Heart left ventricle (tissue), 16 donors: ENCODE measurements at regions of chr10 and their contacts with region 1.

Region 1: DNA sequence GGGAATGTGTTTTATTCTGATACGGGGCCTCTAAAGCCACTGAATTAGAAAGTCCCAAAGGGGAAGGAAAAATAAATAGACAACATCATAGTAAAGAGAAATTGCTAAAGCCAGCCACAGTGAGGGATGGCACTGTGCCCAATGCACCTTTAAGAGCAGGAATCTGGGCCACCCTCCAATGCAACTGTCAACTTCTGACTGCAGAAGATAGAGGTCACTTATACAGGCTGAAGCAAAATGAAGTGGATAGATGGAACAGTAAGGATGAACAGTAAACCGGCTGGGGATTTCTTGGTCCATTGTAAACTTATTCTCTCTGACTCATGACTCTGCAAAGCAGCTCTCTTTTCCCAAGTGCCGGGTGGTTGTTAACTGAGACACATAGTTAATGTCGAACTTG is 54.0 kb upstream of the KCNIP2 start:
- DNase-seq: peak in 2 of 5 donors; percentile 38 to 51
- ATAC-seq: peak in 3 of 4 donors; percentile 54 to 61 (median 59)
- H3K4me3 ChIP-seq: no peak overlapping the region
- H3K27ac ChIP-seq: peak overlapping the region in 7 of 12 donors; percentile 10 to 39 (median 28)
- H3K4me1 ChIP-seq: peaks cover 0 to 73% (median 13%) of the 10 kb centered on the region in 12 donors
- H3K27me3 ChIP-seq: no peaks in the 10 kb centered on the region
- CTCF ChIP-seq: no peak
- POLR2A ChIP-seq: no peak

Region 2: GRCh38 chr10:101968940-101969321 is 71.3 kb after region 1 on chr10:
- intact Hi-C with region 1: loop called in 5 of 10 experiments (anchors 5 to 10 kb)
- DNase-seq: no peak
- ATAC-seq: no peak
- H3K4me3 ChIP-seq: peak overlapping the region in 1 of 12 donors; percentile 9
- H3K27ac ChIP-seq: peak overlapping the region; percentile 34 to 91 (median 62)
- H3K4me1 ChIP-seq: peaks cover 5 to 69% (median 25%) of the 10 kb centered on the region in 12 donors
- H3K27me3 ChIP-seq: no peaks in the 10 kb centered on the region
- CTCF ChIP-seq: no peak
- POLR2A ChIP-seq: no peak